ENCODE measurements at regions of chr10 and their contacts with region 1.

Region 1: GRCh38 chr10:12264204-12264940 is 68.4 kb downstream of the CDC123 start:
- DNase-seq: peak; percentile 84
- ATAC-seq: peak; percentile 91 to 95

Region 2: GRCh38 chr10:11586170-11586569 is 678.2 kb before region 1 on chr10:
- intact Hi-C with region 1: no loop called
- DNase-seq: no peak
- ATAC-seq: no peak

Region 3: DNA sequence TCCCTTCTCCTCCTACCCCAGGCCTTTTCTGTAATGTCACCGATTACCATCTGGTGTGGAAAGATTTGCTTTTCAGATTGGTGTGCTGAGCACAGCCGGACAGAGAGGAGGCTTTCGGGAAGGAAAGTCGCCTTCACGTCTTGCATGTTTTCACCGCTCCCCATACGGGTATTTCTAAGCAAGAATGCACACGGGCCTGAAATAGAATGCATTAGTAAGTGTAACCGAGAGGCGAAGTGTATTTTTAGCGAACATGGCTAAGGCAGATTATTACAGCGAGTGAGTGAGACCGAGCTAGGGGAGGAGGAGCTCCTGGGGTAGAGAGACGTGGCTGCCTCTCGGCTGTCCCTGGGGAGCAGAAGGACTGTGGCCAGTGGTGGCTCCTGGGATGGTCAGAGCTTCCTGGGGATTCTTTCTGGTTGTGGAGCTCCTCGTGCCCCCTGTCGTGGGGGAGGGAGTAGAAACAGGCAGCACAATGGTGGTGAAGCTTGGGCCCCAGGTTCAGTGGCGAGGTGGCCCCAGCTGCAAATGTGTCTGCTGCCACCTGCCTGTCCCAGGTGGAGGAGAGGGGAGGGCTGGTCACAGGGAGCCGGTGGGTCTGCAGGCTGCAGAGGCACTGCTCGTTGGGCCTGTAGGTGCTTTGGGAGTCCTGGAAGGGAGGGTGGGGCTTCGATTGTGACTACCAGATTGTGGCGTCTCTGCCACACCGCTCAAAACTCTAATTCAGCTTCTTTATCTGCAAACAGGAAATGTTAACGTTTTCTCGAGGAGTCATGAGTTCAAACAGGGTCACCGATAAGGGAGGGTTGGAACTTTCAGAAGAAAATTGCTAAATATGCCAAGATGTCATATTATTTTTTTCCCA is 220.8 kb after region 1 on chr10:
- intact Hi-C with region 1: loop called in 1 of 2 experiments (anchors 10 kb)
- DNase-seq: peak; percentile 43
- ATAC-seq: peak; percentile 80

Region 4: GRCh38 chr10:12656518-12657142 is 392.3 kb after region 1 on chr10:
- intact Hi-C with region 1: loop called in 1 of 2 experiments (anchors 5 kb)
- DNase-seq: no peak
- ATAC-seq: peak; percentile 59 to 68

Region 5: DNA sequence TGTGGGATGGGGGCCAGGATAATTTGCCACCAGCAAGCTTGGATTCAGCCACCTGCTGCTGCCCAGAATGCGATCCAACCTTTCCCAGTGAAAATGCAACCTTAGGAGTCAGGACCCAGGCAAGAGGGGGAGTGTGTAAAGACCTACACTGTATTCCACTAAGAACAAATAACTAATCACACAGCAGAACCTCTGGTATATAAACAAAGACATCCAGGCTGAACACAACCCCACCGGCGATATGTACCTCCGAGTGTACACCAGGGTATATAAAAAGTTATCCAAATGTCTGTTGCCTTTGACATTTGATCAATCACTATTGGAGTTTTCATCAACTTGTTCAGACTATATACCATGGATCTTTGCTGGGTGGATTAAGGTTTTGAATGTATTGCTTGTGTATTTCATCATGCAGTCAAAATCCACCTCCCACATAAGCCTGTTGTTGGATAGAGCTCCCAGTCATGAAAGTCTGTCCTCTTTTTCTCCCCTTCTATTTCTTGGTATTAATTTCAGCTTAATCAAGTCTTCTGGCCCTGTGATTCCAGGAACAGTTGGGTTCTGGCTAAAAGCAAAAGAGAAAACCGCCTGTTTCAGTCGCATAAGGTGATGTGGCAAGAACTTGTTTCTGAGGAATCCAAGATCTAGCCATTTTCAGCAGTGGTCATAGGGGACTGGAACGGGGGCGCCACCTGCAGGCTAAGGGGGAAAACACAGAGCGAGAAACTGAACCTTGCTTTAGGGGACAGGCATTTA is 446.4 kb after region 1 on chr10:
- intact Hi-C with region 1: loop called (anchors 2 to 5 kb)
- DNase-seq: peak; percentile 75
- ATAC-seq: peak; percentile 52 to 66

Region 6: DNA sequence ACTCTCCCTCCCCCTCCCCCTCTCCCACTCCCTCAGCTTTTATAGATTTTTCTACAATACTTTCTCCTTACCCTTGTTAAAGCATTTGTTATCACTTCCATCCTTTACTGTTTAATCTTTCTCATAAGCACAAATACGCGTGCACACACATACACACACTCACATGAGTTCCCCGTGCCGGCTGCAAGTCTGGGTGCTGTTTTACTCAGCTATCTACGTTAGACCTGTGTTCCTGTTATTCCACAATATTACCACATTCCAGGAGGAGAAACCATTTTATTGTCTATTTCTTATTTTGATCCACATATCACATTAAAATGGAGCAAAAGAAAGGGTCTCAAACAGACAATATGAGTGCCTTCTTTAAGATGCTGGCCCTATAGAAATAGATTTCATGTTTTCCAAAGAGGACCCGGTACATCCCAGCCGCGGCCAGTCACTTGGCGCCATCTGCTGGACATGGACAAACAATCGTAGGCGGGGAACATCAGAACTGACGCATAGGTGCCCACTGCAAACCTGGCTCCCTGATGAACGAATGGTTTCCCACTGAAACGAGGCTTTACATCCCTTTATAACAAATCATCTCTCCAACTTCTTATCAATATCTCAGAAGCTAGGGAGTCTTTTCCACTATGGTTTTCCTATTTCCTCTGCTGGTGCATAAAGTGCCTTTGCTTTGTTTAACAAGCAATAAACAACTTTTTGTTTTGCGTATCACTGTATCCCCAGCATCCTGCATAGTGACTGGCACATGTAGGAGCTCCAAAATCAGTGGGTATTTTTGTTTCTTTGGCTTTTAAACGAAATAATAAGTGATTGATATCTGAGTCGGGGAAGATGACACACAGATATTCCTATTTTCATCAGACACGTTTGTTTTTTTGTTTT is 810.4 kb after region 1 on chr10:
- intact Hi-C with region 1: loop called in 1 of 2 experiments (anchors 5 kb)
- DNase-seq: peak; percentile 72
- ATAC-seq: peak; percentile 79 to 83

Measured in left cardiac atrium (tissue), 4 donors.